Activated CD4-positive, alpha-beta T cell treated with anti-CD3 and anti-CD28 coated beads for 36 hours (primary cell): ENCODE measurements at regions of chr20 and their contacts with region 1.

Region 1: GRCh38 chr20:5529331-5530148 is 212.8 kb upstream of the PROKR2 start:
- DNase-seq: peak; percentile 96
- ATAC-seq: peak; percentile 96
- H3K4me3 Mint-ChIP-seq: peak overlapping the region; percentile 36
- H3K27ac Mint-ChIP-seq: peak overlapping the region; percentile 55
- H3K4me1 Mint-ChIP-seq: peaks cover 23% of the 10 kb centered on the region
- H3K27me3 Mint-ChIP-seq: no peaks in the 10 kb centered on the region

Region 2: GRCh38 chr20:5557123-5557522 is 27.6 kb after region 1 on chr20:
- CTCF ChIA-PET with region 1: interaction called, 20 read pairs
- POLR2A ChIA-PET with region 1: no interaction called
- intact Hi-C with region 1: no loop called
- DNase-seq: peak; percentile 77
- ATAC-seq: peak; percentile 90
- H3K4me3 Mint-ChIP-seq: no peak overlapping the region
- H3K27ac Mint-ChIP-seq: peak overlapping the region; percentile 51
- H3K4me1 Mint-ChIP-seq: peaks cover 2% of the 10 kb centered on the region
- H3K27me3 Mint-ChIP-seq: no peaks in the 10 kb centered on the region

Region 3: DNA sequence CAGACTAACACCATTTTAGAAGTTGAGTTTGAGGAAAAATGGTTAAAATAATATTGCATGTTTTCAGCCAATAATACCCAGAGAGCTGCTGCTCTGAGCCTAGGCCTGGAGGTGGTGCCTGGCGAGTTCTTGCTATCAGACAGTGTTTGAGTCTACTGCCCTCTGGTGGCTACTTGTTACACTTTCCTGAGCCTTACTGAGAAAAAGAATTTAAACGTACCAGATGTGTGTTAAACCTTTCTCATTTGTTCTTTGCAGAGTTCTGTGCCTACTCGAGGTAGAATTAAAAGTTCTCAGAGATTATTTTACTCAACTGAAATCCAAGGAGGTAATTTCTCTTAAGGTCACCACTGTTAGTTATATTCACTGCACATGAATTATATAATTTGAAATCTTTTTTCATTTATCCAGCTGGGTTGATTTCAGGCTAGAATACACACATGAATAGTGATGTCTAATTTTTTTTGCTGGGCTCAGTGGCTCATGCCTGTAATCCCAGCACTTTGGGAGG is 258.9 kb after region 1 on chr20:
- CTCF ChIA-PET with region 1: interaction called, 118 read pairs
- POLR2A ChIA-PET with region 1: no interaction called
- intact Hi-C with region 1: loop called (anchors 1 kb)
- DNase-seq: peak; percentile 87
- ATAC-seq: peak; percentile 99
- H3K4me3 Mint-ChIP-seq: no peak overlapping the region
- H3K27ac Mint-ChIP-seq: no peak overlapping the region
- H3K4me1 Mint-ChIP-seq: peaks cover 11% of the 10 kb centered on the region
- H3K27me3 Mint-ChIP-seq: no peaks in the 10 kb centered on the region

Region 4: DNA sequence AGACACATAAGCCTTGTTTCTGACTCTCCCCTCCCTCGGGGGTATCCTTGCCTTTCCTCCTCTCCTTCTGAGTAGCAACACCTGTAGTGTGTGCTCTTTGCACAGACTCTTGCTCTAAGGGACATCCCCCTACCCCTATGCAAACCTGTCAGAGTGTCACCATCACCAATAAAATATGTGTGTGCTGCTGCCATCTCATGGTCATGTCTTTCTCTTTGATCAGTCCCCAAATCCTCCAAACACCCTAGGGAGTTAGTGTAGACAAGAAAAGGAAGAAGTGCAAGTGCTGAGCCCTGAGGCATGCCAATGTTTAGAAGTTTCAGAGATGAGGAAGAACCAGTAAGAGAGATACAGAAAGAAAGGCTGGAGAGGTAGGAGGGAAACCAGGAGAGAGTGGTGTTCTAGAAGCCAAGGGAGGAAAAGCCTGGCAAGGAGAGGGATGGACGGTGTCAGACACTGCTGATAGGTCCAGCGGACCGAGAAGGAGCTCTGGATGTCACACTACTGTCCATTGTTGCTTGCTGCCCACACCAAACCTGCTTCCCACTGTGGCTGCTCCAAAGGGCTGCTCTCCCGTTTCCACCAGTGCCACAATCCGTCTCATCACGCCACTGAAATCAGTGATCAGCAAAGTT is 404.4 kb after region 1 on chr20:
- CTCF ChIA-PET with region 1: interaction called, 17 read pairs
- POLR2A ChIA-PET with region 1: no interaction called
- intact Hi-C with region 1: loop called (anchors 1 kb)
- DNase-seq: peak; percentile 36
- ATAC-seq: peak; percentile 88
- H3K4me3 Mint-ChIP-seq: no peak overlapping the region
- H3K27ac Mint-ChIP-seq: no peak overlapping the region
- H3K4me1 Mint-ChIP-seq: peaks cover 8% of the 10 kb centered on the region
- H3K27me3 Mint-ChIP-seq: no peaks in the 10 kb centered on the region

Region 5: DNA sequence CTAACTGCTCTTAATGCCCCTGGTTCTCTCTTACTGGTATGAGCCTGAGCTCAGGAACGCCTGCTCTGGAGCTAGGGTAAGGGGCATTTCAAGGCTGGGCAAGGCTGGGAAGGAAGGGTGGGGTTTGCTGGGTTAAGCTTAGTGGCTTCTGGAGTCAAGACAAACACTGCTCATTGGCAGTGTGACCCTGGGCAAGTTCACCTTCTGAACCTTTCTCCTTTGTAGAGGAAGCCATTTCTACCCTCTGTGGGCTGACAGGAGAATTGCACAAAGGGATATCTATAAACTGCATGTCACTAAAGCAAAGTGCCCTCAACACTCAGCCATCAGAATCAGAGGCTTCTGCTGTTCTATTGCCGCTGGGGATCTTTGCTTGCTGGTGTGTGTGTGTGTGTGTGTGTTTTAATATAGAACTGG is 544.6 kb after region 1 on chr20:
- CTCF ChIA-PET with region 1: interaction called, 27 read pairs
- POLR2A ChIA-PET with region 1: no interaction called
- intact Hi-C with region 1: loop called (anchors 1 kb)
- DNase-seq: peak; percentile 13
- ATAC-seq: peak; percentile 74
- H3K4me3 Mint-ChIP-seq: no peak overlapping the region
- H3K27ac Mint-ChIP-seq: no peak overlapping the region
- H3K4me1 Mint-ChIP-seq: no peaks in the 10 kb centered on the region
- H3K27me3 Mint-ChIP-seq: peaks cover 2% of the 10 kb centered on the region